Prostate gland (tissue), 2 donors: ENCODE measurements at regions of chrX and their contacts with region 1.

Region 1: DNA sequence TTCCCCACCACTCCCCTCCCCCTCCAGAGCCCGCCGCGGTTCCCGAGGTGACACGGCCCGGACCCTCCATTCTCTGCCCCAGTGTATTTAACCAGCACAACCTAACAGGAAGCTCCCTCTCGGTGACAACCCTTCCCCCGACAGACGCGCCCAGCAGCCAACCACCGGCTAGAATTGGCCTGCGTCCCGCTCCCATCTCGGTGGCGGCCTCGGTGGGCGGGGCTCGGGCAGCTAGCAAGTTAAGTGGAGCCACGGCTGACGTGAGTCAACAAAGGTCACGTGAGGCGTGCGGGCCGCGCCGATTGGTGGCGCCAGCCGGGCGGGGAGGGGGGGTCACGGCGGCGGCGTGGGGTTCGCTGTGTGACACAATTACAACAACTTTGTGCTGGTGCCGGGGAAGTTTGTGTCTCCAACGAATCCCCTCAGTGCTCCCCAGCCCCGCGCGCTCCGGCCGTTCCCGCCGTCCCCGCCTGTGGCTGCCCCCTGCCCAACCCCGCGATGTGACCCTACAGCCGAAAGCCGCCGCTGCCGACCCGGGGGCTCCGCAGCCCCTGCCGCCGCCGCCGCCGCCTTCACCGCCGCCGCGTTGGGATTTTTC is at the start of gene KDM6A:
- DNase-seq: peak; percentile 94
- H3K4me3 ChIP-seq: peak within 1 kb of the TSS; percentile 73 to 81
- H3K27ac ChIP-seq: peak within 1 kb of the TSS; percentile 96
- H3K4me1 ChIP-seq: no peaks in the 10 kb centered on the region
- H3K27me3 ChIP-seq: no peaks in the 10 kb centered on the region
- CTCF ChIP-seq: no peak
- POLR2A ChIP-seq: peak; percentile 74
- total RNA-seq, gene KDM6A: 30.1 to 45.1 TPM

Region 2: DNA sequence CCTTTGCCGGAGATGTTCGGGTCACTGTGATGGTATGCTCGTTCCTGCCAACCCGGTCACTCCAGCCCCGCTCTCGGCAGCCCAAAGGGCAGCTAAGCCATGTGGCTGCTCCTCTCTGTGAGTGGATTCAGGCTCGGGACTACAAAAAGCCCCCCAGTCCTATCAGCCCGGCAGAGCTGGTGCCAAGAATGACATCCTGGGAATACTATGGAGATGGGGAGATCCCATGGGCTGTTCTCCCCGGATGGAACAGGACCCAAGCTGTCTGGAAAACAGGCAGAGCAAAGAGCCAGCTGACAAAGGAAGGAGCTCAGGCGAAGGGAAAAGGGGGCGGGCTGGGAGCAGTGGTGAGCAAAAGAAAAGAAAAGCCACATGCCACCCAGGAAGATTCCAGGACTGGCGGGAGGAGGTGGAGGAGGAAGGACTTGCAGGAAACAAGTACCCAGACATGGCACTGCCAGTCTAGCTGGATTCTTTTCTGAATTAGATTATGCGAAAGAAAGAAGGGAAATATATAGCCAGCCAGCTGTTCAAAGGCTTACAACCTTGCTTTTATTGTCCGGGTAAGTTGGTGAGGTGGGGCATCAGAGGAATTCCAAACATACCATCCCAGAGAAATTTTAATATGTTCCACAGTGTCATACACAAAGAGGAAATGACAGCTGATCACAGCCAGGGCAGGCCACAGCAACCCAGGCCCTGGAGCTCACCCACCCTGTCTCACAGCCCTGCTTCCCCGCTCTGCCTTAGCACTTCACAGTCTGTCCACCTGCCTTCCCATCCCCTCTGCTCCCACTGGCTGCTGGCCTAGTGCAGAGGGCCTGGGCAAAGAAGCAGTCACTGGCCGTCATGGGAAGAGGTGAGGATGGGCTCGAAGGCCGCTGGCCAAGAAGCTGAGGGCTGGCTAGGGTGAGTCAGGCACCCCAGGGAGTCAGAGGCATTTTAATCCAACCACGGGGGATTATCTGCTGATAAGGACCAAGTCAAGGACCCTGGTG is 903.1 kb before region 1 on chrX:
- intact Hi-C with region 1: loop called (anchors 5 kb)
- DNase-seq: no peak
- H3K4me3 ChIP-seq: no peak overlapping the region
- H3K27ac ChIP-seq: peak overlapping the region in 1 of 2 donors; percentile 36
- H3K4me1 ChIP-seq: no peaks in the 10 kb centered on the region
- H3K27me3 ChIP-seq: no peaks in the 10 kb centered on the region
- CTCF ChIP-seq: no peak
- POLR2A ChIP-seq: no peak

Region 3: DNA sequence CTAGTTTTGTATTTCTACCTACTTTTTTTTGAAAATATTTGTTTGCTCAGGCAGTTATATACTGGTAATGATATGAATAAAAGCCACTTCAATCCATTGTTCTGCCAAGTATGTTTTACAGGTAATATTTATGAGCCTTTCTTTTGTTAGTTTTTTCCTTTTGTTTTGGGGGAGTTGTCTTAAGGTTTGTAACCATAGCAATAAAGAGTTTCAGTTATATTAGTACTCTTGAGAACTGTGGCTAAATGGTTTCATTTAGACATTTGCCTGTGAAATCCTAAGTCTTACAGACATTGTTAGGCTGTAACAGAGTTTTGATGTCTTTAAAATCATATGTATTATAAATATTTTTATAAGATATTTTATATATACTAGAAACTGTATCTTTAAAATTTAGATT is 177.6 kb after region 1 on chrX:
- intact Hi-C with region 1: no loop called
- DNase-seq: no peak
- H3K4me3 ChIP-seq: no peak overlapping the region
- H3K27ac ChIP-seq: no peak overlapping the region
- H3K4me1 ChIP-seq: no peaks in the 10 kb centered on the region
- H3K27me3 ChIP-seq: no peaks in the 10 kb centered on the region
- CTCF ChIP-seq: no peak
- POLR2A ChIP-seq: no peak

Region 4: DNA sequence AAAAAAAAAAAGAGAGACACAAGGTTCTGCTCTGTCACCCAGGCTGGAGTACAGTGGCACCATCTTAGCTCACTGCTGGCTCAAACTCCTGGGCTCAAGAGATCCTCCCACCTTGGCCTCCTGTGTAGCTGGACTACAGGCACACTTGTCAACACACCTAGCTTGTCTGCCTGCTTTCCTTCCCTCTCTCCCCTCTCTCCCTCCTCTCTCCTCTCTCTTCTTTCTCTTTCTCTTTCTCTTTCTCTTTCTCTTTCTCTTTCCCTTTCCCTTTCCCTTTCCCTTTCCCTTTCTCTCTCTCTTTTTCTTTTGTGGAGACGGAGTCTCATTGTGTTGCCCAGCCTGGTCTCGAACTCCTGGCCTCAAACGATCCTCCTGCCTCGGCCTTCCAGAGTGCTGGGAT is 195.7 kb after region 1 on chrX:
- intact Hi-C with region 1: loop called (anchors 10 kb)
- DNase-seq: no peak
- H3K4me3 ChIP-seq: no peak overlapping the region
- H3K27ac ChIP-seq: no peak overlapping the region
- H3K4me1 ChIP-seq: no peaks in the 10 kb centered on the region
- H3K27me3 ChIP-seq: no peaks in the 10 kb centered on the region
- CTCF ChIP-seq: no peak
- POLR2A ChIP-seq: no peak